ENCODE measurements at regions of chr17 and their contacts with region 1.

Region 1: DNA sequence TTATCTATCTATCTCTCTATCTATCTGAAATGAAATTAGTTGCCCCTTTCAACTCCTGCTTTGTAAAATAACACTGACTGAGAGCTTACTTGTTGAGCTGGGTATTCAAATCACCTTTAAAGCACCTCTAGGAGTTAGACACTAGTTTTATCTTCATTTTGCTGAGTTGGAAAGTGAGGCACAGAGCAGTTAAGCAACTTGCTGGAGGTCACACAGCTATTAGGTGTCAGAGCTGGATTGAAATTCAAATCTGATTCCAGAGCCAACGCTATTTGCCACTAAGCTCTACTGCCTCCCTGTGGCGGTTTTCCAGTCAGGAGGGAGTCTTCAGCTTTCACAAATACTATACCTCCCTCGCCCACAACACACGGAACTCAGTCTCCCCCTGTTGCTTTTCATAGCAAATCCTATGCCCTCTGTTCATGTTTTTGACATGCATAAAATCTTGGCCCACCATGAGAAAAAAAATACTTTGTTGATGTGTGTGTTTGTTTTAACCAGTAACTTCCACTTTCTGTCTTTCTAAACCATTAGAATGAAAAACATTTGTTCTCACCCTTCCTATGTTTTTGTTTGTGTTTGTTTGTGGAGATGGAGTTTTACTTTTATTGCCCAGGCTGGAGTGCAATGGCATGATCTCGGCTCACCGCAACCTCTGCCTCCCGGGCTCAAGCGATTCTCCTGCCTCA is 74.8 kb upstream of the SMURF2 start:
- DNase-seq: no peak
- H3K4me3 ChIP-seq: no peak overlapping the region
- H3K27me3 ChIP-seq: no peaks in the 10 kb centered on the region
- CTCF ChIP-seq: peak; percentile 60

Region 2: DNA sequence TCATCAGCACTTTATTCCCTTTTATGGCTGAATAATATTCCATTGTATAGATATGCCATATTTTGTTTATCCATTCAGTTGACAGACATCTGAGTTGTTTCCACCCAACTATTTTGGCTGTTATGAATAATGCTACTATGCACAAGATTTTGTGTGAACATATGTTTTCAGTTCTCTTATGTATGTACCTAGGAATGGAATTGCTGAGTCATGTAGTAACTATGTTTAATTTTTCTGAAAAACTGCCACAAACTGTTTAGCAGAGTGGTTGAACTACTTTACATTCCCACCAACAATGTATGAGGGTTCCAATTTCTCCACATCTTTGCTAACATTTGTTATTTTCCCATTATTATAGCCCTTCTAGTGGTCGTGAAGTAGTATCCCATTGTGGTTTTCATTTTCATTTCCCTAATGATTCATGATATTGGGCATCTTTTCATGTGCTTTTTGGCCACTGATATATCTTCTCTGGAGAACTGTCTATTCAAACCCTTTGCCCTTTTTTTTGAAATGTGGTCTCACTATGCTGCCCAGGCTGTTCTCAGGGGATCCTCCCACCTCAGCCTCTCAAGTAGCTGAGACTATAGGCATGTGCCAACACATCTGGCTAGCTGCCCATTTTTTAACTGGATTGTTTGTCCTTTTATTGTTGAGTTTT is 101.2 kb before region 1 on chr17:
- CTCF ChIA-PET with region 1: no interaction called
- POLR2A ChIA-PET with region 1: no interaction called
- DNase-seq: peak; percentile 82
- H3K4me3 ChIP-seq: no peak overlapping the region
- H3K27me3 ChIP-seq: no peaks in the 10 kb centered on the region
- CTCF ChIP-seq: no peak

Region 3: GRCh38 chr17:64653325-64653984 is 83.5 kb before region 1 on chr17:
- CTCF ChIA-PET with region 1: interaction called, 10 read pairs
- POLR2A ChIA-PET with region 1: interaction called, 3 read pairs
- DNase-seq: no peak
- H3K4me3 ChIP-seq: no peak overlapping the region
- H3K27me3 ChIP-seq: no peaks in the 10 kb centered on the region
- CTCF ChIP-seq: no peak

Region 4: DNA sequence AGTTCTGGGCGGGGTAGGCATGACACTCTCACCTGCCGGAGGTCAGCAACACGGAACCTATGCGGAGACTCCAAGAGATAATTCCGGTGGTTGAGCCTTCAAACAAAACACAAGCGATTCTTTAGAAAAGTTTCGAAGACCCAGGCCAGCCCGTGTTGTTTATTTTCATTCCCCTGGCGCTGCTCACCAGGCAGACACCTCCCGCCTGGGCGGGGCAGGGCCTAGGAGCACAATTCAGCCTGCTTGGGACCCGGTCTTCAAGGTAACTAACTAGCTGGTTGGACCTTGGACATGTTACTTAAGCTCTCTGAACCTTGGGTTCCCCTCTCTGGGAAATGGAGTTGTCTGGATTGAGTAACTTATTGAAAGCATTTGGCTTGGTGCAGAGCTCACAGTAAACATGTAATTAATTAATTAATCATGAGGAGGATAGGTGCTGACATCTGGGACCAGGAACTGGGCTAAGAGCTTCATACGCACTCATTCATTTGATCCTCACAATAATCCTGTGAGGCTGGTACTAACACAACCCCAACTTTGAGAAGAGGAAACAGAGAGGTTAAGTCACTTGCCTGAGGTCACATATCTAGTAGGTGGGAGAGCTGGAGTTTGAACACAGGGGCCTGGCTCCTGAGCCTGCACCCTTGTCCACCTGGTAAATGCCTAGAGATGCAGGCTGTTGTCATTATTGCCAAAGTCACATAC is 50.4 kb after region 1 on chr17:
- CTCF ChIA-PET with region 1: no interaction called
- POLR2A ChIA-PET with region 1: no interaction called
- DNase-seq: no peak
- H3K4me3 ChIP-seq: no peak overlapping the region
- H3K27me3 ChIP-seq: no peaks in the 10 kb centered on the region
- CTCF ChIP-seq: no peak

Measured in BJ (cell line).